PC-9 (cell line): ENCODE measurements at regions of chr9 and their contacts with region 1.

Region 1: GRCh38 chr9:84187090-84187489 is 153.5 kb downstream of the SLC28A3 start:
- DNase-seq: no peak
- H3K4me3 ChIP-seq: no peak overlapping the region
- H3K27ac ChIP-seq: no peak overlapping the region
- H3K4me1 ChIP-seq: peaks cover 7% of the 10 kb centered on the region
- H3K27me3 ChIP-seq: no peaks in the 10 kb centered on the region
- CTCF ChIP-seq: no peak

Region 2: GRCh38 chr9:83544002-83544698 is 642.9 kb before region 1 on chr9:
- CTCF ChIA-PET with region 1: no interaction called
- POLR2A ChIA-PET with region 1: no interaction called
- intact Hi-C with region 1: no loop called
- DNase-seq: peak; percentile 37 to 71
- H3K4me3 ChIP-seq: no peak overlapping the region
- H3K27ac ChIP-seq: no peak overlapping the region
- H3K4me1 ChIP-seq: peaks cover 11% of the 10 kb centered on the region; the same call in 1 of the 2 replicates
- H3K27me3 ChIP-seq: no peaks in the 10 kb centered on the region
- CTCF ChIP-seq: peak; percentile 82

Region 3: GRCh38 chr9:83956434-83957247 is 230.4 kb before region 1 on chr9:
- CTCF ChIA-PET with region 1: no interaction called
- POLR2A ChIA-PET with region 1: no interaction called
- intact Hi-C with region 1: loop called (anchors 5 kb)
- DNase-seq: peak; percentile 68 to 78
- H3K4me3 ChIP-seq: peak overlapping the region; percentile 69
- H3K27ac ChIP-seq: peak overlapping the region; percentile 50
- H3K4me1 ChIP-seq: peaks cover 32% of the 10 kb centered on the region
- H3K27me3 ChIP-seq: no peaks in the 10 kb centered on the region
- CTCF ChIP-seq: no peak

Region 4: GRCh38 chr9:84129529-84130141 is 57.5 kb before region 1 on chr9:
- CTCF ChIA-PET with region 1: no interaction called
- POLR2A ChIA-PET with region 1: no interaction called
- intact Hi-C with region 1: no loop called
- DNase-seq: no peak
- H3K4me3 ChIP-seq: no peak overlapping the region
- H3K27ac ChIP-seq: no peak overlapping the region
- H3K4me1 ChIP-seq: no peaks in the 10 kb centered on the region
- H3K27me3 ChIP-seq: no peaks in the 10 kb centered on the region
- CTCF ChIP-seq: no peak

Region 5: DNA sequence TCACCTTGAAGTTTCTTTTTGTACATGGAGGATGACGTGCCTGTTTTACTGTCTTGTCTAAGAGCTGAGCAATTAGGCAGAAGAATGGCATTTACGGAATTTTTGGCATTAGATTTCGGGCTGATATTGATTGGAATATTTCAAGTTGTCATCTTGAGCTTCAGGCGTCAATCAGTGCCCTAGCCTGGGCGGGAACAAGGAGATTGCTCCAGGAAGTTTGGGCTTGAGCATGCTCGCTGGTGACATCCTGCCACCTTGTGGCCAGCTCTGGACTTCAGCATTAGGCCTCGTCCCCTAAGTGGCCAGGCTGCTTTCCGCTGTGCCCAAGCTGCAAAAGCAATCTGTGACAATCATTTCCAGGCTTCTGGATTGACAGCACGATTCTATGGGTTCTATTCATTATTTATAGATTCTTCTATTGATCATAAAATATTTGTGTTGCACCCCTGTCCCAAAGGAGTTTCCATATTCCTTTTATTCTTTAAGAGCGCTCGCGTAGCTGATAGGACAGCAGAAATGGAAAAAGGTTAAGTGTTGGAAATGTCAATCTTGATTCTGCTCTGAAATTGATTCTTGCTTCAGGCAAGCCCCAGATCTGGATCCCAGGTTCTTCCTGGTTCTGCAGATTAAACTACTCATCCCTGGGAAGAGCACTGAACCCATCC is 74.1 kb after region 1 on chr9:
- CTCF ChIA-PET with region 1: no interaction called
- POLR2A ChIA-PET with region 1: no interaction called
- intact Hi-C with region 1: loop called (anchors 5 kb)
- DNase-seq: peak; percentile 72 to 77
- H3K4me3 ChIP-seq: no peak overlapping the region
- H3K27ac ChIP-seq: no peak overlapping the region
- H3K4me1 ChIP-seq: 0 out of 2 replicates have a peak, but pooled peaks cover 3% of the 10 kb centered on the region
- H3K27me3 ChIP-seq: no peaks in the 10 kb centered on the region
- CTCF ChIP-seq: peak; percentile 90